AG04449 (cell line): ENCODE measurements at regions of chr7 and their contacts with region 1.

Region 1: DNA sequence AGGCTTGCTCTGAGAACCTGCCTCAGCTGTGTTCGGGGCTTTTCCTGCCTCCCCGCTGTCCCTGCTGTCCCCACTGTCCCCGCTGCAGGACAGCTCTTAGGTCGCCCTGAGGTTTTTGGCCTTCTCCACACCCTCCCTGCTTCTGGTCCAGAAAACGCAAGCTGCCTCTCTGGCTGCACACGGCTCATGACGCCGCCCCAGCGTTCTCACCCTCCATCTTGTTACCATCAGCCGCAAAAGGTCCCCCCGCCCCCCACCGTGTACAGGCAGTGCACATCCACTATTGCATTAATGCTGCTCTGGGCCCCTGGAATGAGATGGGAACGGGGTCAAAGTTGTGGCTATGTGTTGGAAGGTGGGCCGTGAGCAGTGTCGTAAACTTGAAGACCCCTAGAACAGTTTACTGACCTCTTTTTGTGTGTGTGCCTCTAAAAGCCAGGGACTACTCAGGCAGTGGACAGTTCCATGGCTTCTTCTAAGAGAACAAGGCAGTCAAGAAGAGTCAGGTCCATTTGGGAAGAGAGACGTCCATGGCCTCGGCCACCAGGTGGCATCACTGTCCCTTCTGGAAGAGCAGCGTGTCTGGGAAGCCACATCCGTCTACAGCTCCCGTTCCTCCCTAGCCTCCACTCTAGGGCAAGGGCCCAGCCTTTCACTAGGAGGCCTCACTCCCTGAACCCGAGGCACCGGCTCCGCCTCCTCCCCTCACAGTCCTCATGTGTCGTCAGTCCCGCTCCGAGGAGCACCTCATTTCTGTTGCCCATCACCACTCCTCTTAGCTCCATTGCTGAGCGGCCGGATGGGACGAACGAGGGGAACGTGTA is 38.5 kb upstream of the MKRN1 start:
- DNase-seq: peak; percentile 54
- H3K4me3 ChIP-seq: no peak overlapping the region
- CTCF ChIP-seq: peak; percentile 96

Region 2: GRCh38 chr7:140479062-140479738 is 38.6 kb before region 1 on chr7 and contains the start of gene MKRN1:
- CTCF ChIA-PET with region 1: interaction called, 15 read pairs
- POLR2A ChIA-PET with region 1: no interaction called
- DNase-seq: peak; percentile 47
- H3K4me3 ChIP-seq: peak within 1 kb of the TSS; percentile 81
- CTCF ChIP-seq: no peak

Region 3: DNA sequence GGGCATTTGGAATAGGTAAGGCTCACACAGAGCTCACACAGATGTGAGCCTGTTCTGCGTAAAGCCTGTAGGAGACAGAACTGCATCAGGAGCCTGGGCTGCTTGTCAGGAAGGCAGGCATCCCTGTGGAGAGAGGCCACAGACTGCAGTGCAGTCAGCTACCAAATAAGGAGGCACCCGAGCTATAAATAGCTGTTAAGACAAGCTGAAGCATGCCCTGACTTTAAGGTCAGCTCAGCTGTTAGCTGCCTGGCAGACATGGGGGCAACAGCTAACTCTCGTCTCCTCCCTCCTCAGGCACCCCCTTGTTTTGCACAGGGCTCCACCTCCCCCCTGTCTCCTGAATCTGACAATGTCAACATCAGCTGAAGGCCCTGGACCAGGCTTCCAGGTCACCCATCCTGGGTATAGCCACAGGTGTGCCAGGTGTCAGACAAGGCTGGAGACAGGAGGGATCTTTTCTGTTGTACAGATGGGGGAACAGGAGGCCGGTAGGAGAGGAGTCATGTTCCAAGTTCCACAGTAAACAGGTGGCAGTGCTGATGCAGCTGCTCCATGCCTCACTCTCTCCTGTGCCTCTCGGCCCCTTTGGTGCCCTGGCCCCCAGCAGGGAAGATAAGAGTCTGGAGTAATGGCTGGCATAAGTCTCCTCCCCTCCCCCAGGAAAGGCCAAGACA is 10.8 kb before region 1 on chr7:
- CTCF ChIA-PET with region 1: interaction called, 17 read pairs
- POLR2A ChIA-PET with region 1: no interaction called
- DNase-seq: peak; percentile 68
- H3K4me3 ChIP-seq: no peak overlapping the region
- CTCF ChIP-seq: peak; percentile 20

Region 4: DNA sequence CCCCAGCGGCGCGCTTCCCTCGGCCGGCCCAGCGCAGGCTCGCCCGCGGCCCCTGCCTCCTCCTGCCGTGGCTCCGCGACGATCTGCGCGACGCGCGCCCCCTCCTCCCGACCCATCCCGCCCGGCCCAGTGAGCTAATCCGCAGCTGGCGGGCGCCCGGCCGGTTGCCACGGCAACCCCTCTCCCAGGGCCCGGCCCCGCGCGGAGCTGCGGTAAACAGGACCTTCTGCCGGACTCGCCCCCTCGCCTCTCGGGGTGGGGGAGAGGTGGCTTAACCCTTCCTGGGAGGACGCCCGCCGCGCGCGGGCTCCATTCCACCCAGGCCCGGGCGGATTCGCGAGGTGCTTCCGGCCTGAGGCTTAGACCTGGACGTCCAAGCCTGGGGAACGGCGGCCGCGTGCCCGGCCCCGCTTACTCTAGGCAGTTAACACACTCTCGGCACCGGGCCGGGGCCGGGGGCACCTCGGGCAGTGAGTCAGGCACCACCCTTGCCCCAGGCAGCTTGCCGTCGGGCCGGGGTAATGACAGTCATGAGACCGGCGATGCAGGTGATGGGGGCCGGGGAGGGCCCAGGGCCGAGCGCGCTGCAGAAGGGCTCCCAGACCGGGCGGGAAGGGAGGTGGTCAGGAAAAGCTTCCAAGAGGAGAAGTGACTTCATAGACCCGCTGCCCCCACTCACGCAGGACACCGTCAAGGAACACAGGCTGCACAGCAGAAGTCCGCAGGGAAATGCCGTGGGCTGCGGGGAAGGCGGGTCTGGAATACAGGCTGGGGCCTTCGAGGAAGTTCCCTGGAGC is 123.2 kb after region 1 on chr7 and contains the start of gene DENND2A:
- CTCF ChIA-PET with region 1: interaction called, 309 read pairs
- POLR2A ChIA-PET with region 1: no interaction called
- DNase-seq: no peak
- H3K4me3 ChIP-seq: peak within 1 kb of the TSS; percentile 68
- CTCF ChIP-seq: no peak

Region 5: DNA sequence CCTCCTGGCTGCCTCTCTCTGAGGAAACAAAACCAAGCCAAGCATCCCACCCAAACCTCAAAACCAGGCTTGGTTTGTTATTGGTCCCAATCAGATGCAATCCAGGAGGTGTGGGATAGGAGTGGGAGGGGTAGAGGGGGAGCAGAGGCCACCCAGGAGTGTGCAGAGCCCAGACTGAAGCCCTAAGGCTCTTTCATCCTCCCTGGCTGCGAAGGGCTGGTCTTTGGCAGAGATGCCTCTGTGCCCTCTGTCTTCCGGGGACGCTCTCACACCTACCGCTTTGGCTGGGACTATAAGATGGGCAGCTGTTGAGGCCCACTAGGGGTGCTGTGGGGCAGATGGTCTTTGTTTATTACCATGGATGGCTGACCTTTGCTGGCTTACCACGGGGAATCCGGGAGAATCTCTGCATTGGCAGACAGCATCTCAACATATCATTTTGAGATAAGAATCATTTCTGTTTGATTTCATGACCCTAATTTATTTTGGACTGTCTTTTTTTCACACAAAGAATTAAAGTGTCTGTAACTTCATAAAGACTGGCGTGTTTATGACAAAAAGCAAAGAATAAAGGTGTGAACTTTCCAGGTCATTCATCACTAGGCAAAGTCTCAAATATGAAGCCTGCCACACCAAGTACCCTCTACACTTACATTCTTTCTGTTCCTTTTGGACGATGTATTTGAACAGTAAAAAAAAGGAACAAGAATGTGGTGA is 129.3 kb after region 1 on chr7:
- CTCF ChIA-PET with region 1: interaction called, 309 read pairs
- POLR2A ChIA-PET with region 1: no interaction called
- DNase-seq: no peak
- H3K4me3 ChIP-seq: no peak overlapping the region
- CTCF ChIP-seq: peak; percentile 63

Region 6: DNA sequence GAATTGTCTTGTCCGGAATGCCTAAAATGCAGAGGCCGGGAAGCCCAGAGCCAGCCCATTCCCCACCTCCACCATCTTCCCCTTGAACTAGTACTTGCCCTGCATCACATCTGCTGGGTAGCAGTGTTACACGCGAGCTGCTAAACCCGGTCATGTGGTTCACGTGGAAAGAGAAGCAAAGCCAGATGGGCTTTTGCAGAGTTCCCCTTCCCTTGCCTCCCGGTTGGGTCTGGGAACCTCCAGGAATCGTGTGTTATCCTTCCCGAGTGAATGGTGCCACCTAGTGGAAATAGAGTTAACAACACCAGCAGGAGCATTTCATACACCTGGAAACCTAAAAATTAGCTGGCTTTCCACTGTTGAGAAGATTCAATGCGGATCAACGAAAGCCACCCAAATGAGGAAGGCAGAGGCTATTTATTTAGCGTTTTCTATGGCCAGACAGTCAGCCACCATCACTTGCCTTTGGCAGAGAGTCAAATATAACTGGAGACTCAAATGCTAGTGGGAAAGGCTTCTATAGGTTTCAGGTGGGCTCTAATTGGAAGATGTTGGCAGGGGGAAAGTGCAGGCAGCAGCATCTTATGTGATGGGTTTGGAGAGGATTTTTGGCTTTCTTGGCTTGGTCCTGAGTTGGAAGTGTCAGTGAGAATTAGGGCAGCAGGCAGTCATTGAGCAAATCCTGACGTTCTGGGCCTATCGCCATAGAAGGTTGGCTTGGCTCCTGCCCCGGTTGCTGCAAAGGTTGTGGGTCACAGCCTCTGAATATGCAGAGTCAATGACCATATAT is 135.8 kb after region 1 on chr7:
- CTCF ChIA-PET with region 1: interaction called, 309 read pairs
- POLR2A ChIA-PET with region 1: interaction called, 3 read pairs
- DNase-seq: no peak
- H3K4me3 ChIP-seq: no peak overlapping the region
- CTCF ChIP-seq: peak; percentile 76

Region 7: GRCh38 chr7:140661121-140661520 is 143.4 kb after region 1 on chr7:
- CTCF ChIA-PET with region 1: interaction called, 76 read pairs
- POLR2A ChIA-PET with region 1: interaction called, 4 read pairs
- DNase-seq: no peak
- H3K4me3 ChIP-seq: no peak overlapping the region
- CTCF ChIP-seq: peak; percentile 18

Region 8: DNA sequence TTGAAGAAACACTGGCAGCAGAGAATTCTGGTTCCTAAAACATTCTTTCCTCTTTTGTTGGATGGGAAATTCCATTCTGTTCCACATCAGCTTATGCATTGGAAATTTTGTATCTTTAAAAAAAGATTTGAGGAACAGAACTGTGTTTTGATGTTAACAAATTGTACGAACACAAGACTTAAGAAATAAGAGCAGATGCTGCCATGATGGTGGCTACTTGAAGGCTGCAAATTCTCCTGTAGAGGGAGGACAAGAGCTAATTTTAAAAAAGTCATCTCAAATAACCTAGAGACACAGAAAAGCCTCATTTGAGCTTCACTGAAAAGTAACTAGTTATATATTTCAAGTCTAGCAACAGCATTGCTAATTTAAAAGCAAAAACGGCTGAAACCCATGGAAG is 208.5 kb after region 1 on chr7:
- CTCF ChIA-PET with region 1: no interaction called
- POLR2A ChIA-PET with region 1: no interaction called
- DNase-seq: no peak
- H3K4me3 ChIP-seq: no peak overlapping the region
- CTCF ChIP-seq: peak; percentile 17